Caco-2 (cell line): ENCODE measurements at regions of chr15 and their contacts with region 1.

Region 1: DNA sequence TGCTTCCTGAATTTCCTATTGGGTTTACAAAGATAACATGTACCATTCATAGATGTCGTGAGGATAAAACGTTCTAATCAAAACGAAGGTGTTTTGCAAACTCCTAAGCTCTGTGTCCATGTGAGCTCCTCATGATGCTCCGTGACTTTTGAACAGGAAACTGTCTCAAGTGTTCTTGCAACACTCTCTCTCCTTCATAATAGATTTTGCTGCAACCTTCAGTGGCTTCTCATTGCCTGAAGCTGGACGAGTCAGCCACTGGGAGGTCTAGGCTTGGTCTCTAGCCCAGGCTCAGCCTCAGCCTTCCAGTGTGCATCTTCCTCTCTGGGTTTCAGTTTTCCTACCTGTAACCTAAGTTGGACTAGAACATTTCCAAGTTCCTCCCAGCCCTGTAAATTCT is 18.7 kb upstream of the BCL2A1 start:
- DNase-seq: no peak
- H3K4me3 ChIP-seq: no peak overlapping the region
- H3K4me3 Mint-ChIP-seq: no peak overlapping the region
- H3K27ac Mint-ChIP-seq: no peak overlapping the region
- H3K4me1 ChIP-seq: no peaks in the 10 kb centered on the region
- H3K4me1 Mint-ChIP-seq: no peaks in the 10 kb centered on the region
- H3K27me3 ChIP-seq: no peaks in the 10 kb centered on the region
- H3K27me3 Mint-ChIP-seq: peaks cover 2% of the 10 kb centered on the region
- CTCF ChIP-seq: no peak

Region 2: DNA sequence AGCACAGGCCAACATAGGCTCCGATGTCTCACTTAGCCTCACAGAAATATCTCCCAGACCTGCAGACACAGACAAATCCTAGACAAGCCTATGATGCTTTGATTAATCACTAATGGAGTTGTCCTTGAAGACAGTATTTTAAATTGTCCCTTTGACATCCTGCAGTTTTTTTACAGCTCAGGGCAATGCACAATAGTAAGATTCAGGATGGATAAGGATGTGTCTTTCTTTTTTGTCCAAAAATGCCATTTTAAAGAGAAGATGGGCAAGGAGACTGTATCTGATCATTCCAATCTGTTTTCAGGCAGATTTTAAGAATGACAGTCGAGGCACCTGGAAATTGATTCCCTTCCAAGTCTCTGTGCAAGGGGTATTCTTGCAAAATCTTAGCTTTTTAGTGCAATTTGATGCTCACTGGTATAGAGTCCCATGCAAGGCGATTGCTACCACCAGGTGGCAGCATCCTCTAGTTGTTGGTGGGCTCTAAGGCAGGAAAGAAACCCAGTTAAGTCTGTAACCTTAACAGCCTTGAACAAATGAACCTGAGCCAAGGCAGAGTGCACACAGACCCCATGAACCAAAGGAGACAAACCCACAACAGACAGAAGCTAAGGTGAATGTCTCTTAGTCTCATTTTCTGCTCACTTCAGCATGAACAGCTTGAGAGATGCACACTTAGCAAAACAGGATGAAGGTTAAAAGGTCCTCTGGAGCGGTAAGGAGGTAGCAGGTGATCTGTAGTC is 608.8 kb before region 1 on chr15:
- CTCF ChIA-PET with region 1: no interaction called
- POLR2A ChIA-PET with region 1: no interaction called
- intact Hi-C with region 1: loop called (anchors 1 kb)
- DNase-seq: peak; percentile 68 to 78
- H3K4me3 ChIP-seq: no peak overlapping the region
- H3K4me3 Mint-ChIP-seq: no peak overlapping the region
- H3K27ac Mint-ChIP-seq: no peak overlapping the region
- H3K4me1 ChIP-seq: no peaks in the 10 kb centered on the region
- H3K4me1 Mint-ChIP-seq: no peaks in the 10 kb centered on the region
- H3K27me3 ChIP-seq: no peaks in the 10 kb centered on the region
- H3K27me3 Mint-ChIP-seq: no peaks in the 10 kb centered on the region
- CTCF ChIP-seq: peak; percentile 65 to 76

Region 3: DNA sequence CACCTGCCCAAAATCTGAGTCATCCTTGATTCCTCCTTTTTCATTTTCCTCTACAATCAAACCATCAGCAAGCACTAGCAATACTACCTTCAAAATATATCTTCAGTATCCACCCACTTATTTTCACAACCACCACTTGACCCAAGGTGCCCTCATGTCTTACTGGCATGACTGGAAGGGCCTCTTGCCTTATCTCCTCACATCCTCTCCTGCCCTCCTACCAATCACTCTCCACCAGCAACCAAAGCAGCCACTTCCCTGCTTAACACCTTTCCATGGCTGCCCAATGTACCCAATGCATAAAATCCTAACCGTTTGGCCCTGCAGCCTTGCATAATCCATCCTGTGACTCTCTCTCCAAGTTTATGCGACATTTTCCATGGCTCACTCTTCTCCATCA is 168.9 kb before region 1 on chr15:
- CTCF ChIA-PET with region 1: no interaction called
- POLR2A ChIA-PET with region 1: no interaction called
- intact Hi-C with region 1: no loop called
- DNase-seq: no peak
- H3K4me3 ChIP-seq: no peak overlapping the region
- H3K4me3 Mint-ChIP-seq: no peak overlapping the region
- H3K27ac Mint-ChIP-seq: no peak overlapping the region
- H3K4me1 ChIP-seq: no peaks in the 10 kb centered on the region
- H3K4me1 Mint-ChIP-seq: no peaks in the 10 kb centered on the region
- H3K27me3 ChIP-seq: no peaks in the 10 kb centered on the region
- H3K27me3 Mint-ChIP-seq: no peaks in the 10 kb centered on the region
- CTCF ChIP-seq: no peak

Region 4: GRCh38 chr15:79853458-79854328 is 136.0 kb before region 1 on chr15:
- CTCF ChIA-PET with region 1: no interaction called
- POLR2A ChIA-PET with region 1: no interaction called
- intact Hi-C with region 1: loop called (anchors 2 kb)
- DNase-seq: peak; percentile 61 to 76
- H3K4me3 ChIP-seq: no peak overlapping the region
- H3K4me3 Mint-ChIP-seq: no peak overlapping the region
- H3K27ac Mint-ChIP-seq: peak overlapping the region; percentile 18
- H3K4me1 ChIP-seq: 0 out of 2 replicates have a peak, but pooled peaks cover 3% of the 10 kb centered on the region
- H3K4me1 Mint-ChIP-seq: peaks cover 21% of the 10 kb centered on the region
- H3K27me3 ChIP-seq: no peaks in the 10 kb centered on the region
- H3K27me3 Mint-ChIP-seq: no peaks in the 10 kb centered on the region
- CTCF ChIP-seq: peak; percentile 84 to 95

Region 5: DNA sequence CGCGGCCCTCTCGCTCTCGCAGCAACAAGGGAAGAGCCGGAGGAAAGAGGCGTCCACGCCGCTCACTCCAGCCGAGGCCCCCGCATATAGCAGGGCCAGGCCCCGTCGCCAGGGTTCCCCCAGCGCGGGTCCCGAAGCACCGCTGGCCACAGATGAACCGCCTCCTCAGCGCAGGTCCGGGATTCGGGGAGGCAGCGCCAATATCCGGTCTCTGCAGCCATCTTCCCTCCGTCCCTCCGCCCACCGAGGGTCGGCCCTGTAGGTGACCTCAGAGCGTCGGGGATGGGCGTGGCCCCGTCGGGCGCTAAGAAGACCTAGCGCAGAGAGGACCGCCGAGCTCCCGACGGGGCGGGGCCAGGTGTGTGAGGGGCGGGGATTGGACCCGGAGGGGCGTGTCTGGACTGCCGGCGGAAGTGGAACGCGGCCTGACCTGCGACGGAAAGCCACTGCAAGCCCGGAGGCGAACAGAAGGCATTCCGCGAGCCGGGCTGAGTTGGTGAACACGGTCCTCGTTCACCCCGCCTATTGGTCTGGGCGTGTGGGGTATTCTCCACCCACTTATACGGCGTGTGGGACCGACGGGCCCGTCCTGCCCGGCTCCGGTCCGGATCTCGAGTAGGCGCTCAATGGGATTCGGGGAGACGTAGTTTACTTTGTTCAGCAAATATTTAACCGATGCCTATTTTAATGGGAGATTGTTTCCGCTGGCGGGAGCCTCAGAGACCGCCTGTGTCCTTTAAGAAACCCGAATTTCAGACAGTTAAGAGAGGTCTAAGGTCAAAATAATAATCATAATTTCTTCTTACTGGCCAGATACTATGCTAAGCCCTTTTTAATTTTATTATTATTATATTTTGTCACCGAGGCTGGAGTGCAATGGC is 65.9 kb before region 1 on chr15:
- CTCF ChIA-PET with region 1: no interaction called
- POLR2A ChIA-PET with region 1: no interaction called
- intact Hi-C with region 1: loop called (anchors 1 kb)
- DNase-seq: peak; percentile 97 to 99
- H3K4me3 ChIP-seq: peak overlapping the region; percentile 94
- H3K4me3 Mint-ChIP-seq: peak overlapping the region; percentile 83
- H3K27ac Mint-ChIP-seq: peak overlapping the region; percentile 91
- H3K4me1 ChIP-seq: 0 out of 2 replicates have a peak, but pooled peaks cover 6% of the 10 kb centered on the region
- H3K4me1 Mint-ChIP-seq: no peaks in the 10 kb centered on the region
- H3K27me3 ChIP-seq: no peaks in the 10 kb centered on the region
- H3K27me3 Mint-ChIP-seq: no peaks in the 10 kb centered on the region
- CTCF ChIP-seq: no peak

Region 6: DNA sequence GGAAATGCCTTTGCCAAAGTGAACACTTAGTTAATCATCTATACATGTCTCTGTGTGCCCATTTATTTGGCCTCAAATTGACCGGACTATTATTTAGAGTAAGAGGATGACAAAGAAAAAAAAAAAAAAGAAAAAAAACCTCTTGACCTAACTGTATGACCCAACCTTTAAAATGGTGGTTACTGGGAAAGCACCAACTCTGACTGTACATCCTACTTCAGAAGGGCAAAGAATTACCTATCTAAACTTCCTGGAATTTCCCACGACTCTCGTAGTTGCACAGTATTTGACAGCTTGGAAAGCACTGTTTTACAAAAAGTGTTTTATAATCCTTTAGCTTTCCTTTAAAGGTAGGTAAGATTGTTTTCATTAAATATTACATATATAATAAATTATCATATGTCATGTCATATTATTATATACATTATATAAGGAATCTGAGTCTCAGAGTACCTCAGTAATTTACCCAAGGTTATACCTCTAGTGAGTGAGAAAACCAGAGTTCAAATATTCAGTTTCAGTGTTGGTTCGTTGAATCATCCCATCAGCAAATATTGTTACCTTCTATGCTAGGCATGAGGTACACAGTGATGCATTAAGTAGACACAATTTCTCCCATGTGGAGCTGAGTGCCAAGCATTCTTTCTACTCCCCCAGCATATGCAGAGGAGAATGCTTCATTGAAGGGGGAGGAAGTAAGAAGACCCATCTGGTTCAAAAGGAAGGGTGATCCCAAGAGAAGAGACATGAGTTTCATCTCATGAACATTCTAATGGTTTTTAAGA is 23.6 kb before region 1 on chr15:
- CTCF ChIA-PET with region 1: no interaction called
- POLR2A ChIA-PET with region 1: no interaction called
- intact Hi-C with region 1: no loop called
- DNase-seq: no peak
- H3K4me3 ChIP-seq: no peak overlapping the region
- H3K4me3 Mint-ChIP-seq: no peak overlapping the region
- H3K27ac Mint-ChIP-seq: no peak overlapping the region
- H3K4me1 ChIP-seq: no peaks in the 10 kb centered on the region
- H3K4me1 Mint-ChIP-seq: no peaks in the 10 kb centered on the region
- H3K27me3 ChIP-seq: no peaks in the 10 kb centered on the region
- H3K27me3 Mint-ChIP-seq: no peaks in the 10 kb centered on the region
- CTCF ChIP-seq: no peak

Region 7: GRCh38 chr15:80173022-80173759 is 183.5 kb after region 1 on chr15:
- CTCF ChIA-PET with region 1: interaction called, 3 read pairs
- POLR2A ChIA-PET with region 1: no interaction called
- intact Hi-C with region 1: loop called (anchors 10 kb)
- DNase-seq: peak; percentile 75 to 81
- H3K4me3 ChIP-seq: no peak overlapping the region
- H3K4me3 Mint-ChIP-seq: no peak overlapping the region
- H3K27ac Mint-ChIP-seq: no peak overlapping the region
- H3K4me1 ChIP-seq: no peaks in the 10 kb centered on the region
- H3K4me1 Mint-ChIP-seq: no peaks in the 10 kb centered on the region
- H3K27me3 ChIP-seq: no peaks in the 10 kb centered on the region
- H3K27me3 Mint-ChIP-seq: no peaks in the 10 kb centered on the region
- CTCF ChIP-seq: peak; percentile 78 to 92

Region 8: GRCh38 chr15:80401456-80401855 is 411.8 kb after region 1 on chr15:
- CTCF ChIA-PET with region 1: no interaction called
- POLR2A ChIA-PET with region 1: no interaction called
- intact Hi-C with region 1: no loop called
- DNase-seq: no peak
- H3K4me3 ChIP-seq: no peak overlapping the region
- H3K4me3 Mint-ChIP-seq: no peak overlapping the region
- H3K27ac Mint-ChIP-seq: no peak overlapping the region
- H3K4me1 ChIP-seq: no peaks in the 10 kb centered on the region
- H3K4me1 Mint-ChIP-seq: no peaks in the 10 kb centered on the region
- H3K27me3 ChIP-seq: peaks cover 3% of the 10 kb centered on the region
- H3K27me3 Mint-ChIP-seq: peaks cover 37% of the 10 kb centered on the region
- CTCF ChIP-seq: no peak